HCT116 (cell line): ENCODE measurements at regions of chr7 and their contacts with region 1.

Region 1: DNA sequence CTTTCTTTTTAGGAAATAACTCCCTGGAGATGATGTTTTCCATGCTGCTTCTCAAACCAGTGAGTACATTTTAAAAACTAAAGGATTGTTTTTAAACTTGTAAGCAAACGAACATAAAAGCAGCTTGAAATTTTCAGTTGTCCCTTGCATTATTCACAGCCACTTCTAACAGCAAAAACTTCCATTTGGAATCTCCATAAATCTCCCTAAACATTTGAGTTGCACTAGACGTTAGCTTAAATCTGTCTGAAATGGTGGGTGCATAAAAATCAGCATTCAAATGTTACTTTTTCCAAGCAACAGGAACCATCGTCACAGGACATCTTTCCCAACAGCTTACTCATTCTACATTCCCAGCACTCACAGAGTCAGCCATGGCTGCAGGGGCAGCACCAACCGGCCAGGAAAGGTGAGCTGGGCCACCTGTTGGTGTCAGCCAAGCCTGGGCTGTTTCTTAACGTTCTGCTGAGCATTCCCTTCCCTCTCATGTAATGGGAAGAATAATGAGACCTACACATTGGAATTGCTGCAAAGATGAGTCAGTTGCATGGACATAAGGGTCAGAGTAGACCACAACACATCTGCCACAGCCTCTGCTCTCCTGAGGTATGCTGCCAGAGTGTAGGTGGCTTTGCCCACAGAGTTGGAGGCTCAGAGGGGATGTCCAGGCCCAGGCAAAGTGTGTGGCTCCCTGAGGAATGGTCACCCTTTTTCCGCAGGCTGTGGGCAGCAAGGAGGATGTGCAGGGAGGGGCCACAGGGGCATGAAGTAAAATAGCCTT is 163.1 kb downstream of the TNS3 start:
- DNase-seq: no peak
- ATAC-seq: no peak
- H3K4me3 ChIP-seq: no peak overlapping the region
- H3K27ac ChIP-seq: no peak overlapping the region
- H3K4me1 ChIP-seq: no peaks in the 10 kb centered on the region
- H3K27me3 ChIP-seq: no peaks in the 10 kb centered on the region
- CTCF ChIP-seq: no peak
- POLR2A ChIP-seq: no peak
- RAD21 ChIP-seq: no peak

Region 2: GRCh38 chr7:47435889-47436312 is 17.1 kb after region 1 on chr7:
- CTCF ChIA-PET with region 1: interaction called, 11 read pairs
- POLR2A ChIA-PET with region 1: no interaction called
- RAD21 ChIA-PET with region 1: no interaction called
- intact Hi-C with region 1: no loop called
- DNase-seq: peak; percentile 70
- ATAC-seq: peak; percentile 98
- H3K4me3 ChIP-seq: no peak overlapping the region
- H3K27ac ChIP-seq: no peak overlapping the region
- H3K4me1 ChIP-seq: peaks cover 0 to 5% of the 10 kb centered on the region in 2 experiments; a peak in 2 of 4 replicates
- H3K27me3 ChIP-seq: no peaks in the 10 kb centered on the region
- CTCF ChIP-seq: peak; percentile 69 to 80 (median 75)
- POLR2A ChIP-seq: no peak
- RAD21 ChIP-seq: peak; percentile 89

Region 3: GRCh38 chr7:48213226-48213625 is 794.4 kb after region 1 on chr7:
- CTCF ChIA-PET with region 1: no interaction called
- POLR2A ChIA-PET with region 1: no interaction called
- RAD21 ChIA-PET with region 1: no interaction called
- intact Hi-C with region 1: no loop called
- DNase-seq: no peak
- ATAC-seq: no peak
- H3K4me3 ChIP-seq: no peak overlapping the region
- H3K27ac ChIP-seq: no peak overlapping the region
- H3K4me1 ChIP-seq: no peaks in the 10 kb centered on the region
- H3K27me3 ChIP-seq: peaks cover 8% of the 10 kb centered on the region; the same call in 1 of the 2 replicates
- CTCF ChIP-seq: no peak
- POLR2A ChIP-seq: no peak
- RAD21 ChIP-seq: no peak